ENCODE measurements at regions of chr12 and their contacts with region 1.

Region 1: GRCh38 chr12:50084775-50085614 is at the start of gene SMARCD1:
- DNase-seq: peak; percentile 68 to 88 (median 77)
- ATAC-seq: peak; percentile 87 to 94 (median 92)
- H3K4me3 ChIP-seq: peak within 1 kb of the TSS; percentile 80 to 83
- H3K4me3 Mint-ChIP-seq: peak within 1 kb of the TSS; percentile 87 to 93 (median 87)
- H3K27ac ChIP-seq: peak within 1 kb of the TSS; percentile 95
- H3K27ac Mint-ChIP-seq: peak within 1 kb of the TSS; percentile 93 to 98
- H3K4me1 ChIP-seq: peaks cover 10 to 17% of the 10 kb centered on the region in 2 experiments
- H3K4me1 Mint-ChIP-seq: peaks cover 39 to 44% (median 40%) of the 10 kb centered on the region in 3 donors
- H3K27me3 ChIP-seq: no peaks in the 10 kb centered on the region
- H3K27me3 Mint-ChIP-seq: no peaks in the 10 kb centered on the region
- total RNA-seq, gene SMARCD1: 71.8 to 79.8 (median 78.8) TPM

Region 2: DNA sequence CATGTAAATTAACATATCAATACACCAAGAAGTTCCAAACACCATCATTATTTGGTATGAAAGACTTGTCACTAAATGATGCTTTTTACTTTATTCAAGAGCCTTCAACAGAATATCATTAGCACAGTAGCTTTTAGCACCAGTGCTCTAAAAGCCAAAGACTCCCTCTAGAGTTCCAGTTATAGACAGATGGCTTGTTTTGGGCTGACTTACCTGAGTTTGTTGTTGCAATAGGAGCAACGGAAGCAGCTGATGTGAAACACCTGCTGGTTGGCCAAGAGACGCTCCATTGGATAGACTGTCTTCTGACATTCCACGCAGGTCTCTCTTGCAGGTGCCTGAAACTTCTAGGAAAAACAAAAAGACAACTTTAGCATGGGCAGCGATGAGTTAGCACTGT is 96.7 kb after region 1 on chr12:
- CTCF ChIA-PET with region 1: interaction called in 1 of 2 experiments, 10 read pairs
- POLR2A ChIA-PET with region 1: no interaction called
- DNase-seq: no peak
- ATAC-seq: no peak
- H3K4me3 ChIP-seq: no peak overlapping the region
- H3K4me3 Mint-ChIP-seq: no peak overlapping the region
- H3K27ac ChIP-seq: no peak overlapping the region
- H3K27ac Mint-ChIP-seq: no peak overlapping the region
- H3K4me1 ChIP-seq: no peaks in the 10 kb centered on the region
- H3K4me1 Mint-ChIP-seq: peaks cover 0 to 4% (median 4%) of the 10 kb centered on the region in 3 donors
- H3K27me3 ChIP-seq: no peaks in the 10 kb centered on the region
- H3K27me3 Mint-ChIP-seq: no peaks in the 10 kb centered on the region

Measured in T-cell (primary cell).